ENCODE measurements at regions of chr1 and their contacts with region 1.

Region 1: GRCh38 chr1:150186789-150187559 is 37.3 kb downstream of the PLEKHO1 start:
- DNase-seq: peak; percentile 62 to 76 (median 64)
- ATAC-seq: peak; percentile 89
- H3K4me3 ChIP-seq: no peak overlapping the region
- H3K27ac ChIP-seq: peak overlapping the region; percentile 73; the same call in 2 of the 3 replicates
- H3K4me1 ChIP-seq: peaks cover 4 to 12% of the 10 kb centered on the region in 2 experiments; a peak in 4 of 5 replicates
- H3K27me3 ChIP-seq: no peaks in the 10 kb centered on the region
- CTCF ChIP-seq: peak; percentile 29 to 72 (median 51); a peak in 5 of 6 replicates
- EP300 ChIP-seq: peak; percentile 67
- POLR2A ChIP-seq: no peak
- RAD21 ChIP-seq: peak; percentile 73 to 75

Region 2: DNA sequence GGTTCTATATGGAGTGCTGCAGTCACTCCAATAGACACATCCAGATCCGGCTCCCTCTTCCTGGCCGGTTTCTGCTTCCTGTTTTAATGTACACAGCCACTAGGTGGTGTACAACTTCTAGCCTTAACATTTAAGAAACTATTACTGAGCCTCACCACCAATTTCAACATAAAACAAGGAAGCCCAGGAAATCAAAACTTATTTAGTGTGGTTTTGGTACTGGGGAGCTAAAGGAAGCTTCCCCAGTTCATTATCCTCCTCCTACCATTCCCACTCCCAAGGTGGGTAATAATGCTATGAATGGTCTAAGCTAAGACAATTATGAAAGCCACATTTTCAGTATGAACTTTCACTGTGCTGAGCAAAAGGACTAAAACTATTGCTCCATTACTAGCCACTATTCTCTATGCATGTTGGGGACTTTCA is 224.8 kb before region 1 on chr1:
- CTCF ChIA-PET with region 1: interaction called, 6 read pairs
- POLR2A ChIA-PET with region 1: interaction called, 3 read pairs
- in situ Hi-C with region 1: no loop called
- intact Hi-C with region 1: loop called (anchors 5 kb)
- DNase-seq: peak; percentile 52 to 79 (median 70)
- ATAC-seq: peak; percentile 96
- H3K4me3 ChIP-seq: no peak overlapping the region
- H3K27ac ChIP-seq: no peak overlapping the region
- H3K4me1 ChIP-seq: no peaks in the 10 kb centered on the region
- H3K27me3 ChIP-seq: no peaks in the 10 kb centered on the region
- CTCF ChIP-seq: peak; percentile 70 to 85 (median 77)
- EP300 ChIP-seq: no peak
- POLR2A ChIP-seq: no peak
- RAD21 ChIP-seq: peak; percentile 87 to 90

Region 3: GRCh38 chr1:150067184-150068036 is 119.6 kb before region 1 on chr1 and contains the start of gene VPS45:
- CTCF ChIA-PET with region 1: interaction called, 19 read pairs
- POLR2A ChIA-PET with region 1: interaction called, 8 read pairs
- in situ Hi-C with region 1: no loop called
- intact Hi-C with region 1: loop called (anchors 5 kb)
- DNase-seq: peak; percentile 87 to 94 (median 90)
- ATAC-seq: peak; percentile 98
- H3K4me3 ChIP-seq: peak within 1 kb of the TSS; percentile 47
- H3K27ac ChIP-seq: peak within 1 kb of the TSS; percentile 75
- H3K4me1 ChIP-seq: peaks cover 9 to 14% of the 10 kb centered on the region in 2 experiments; a peak in 3 of 5 replicates
- H3K27me3 ChIP-seq: no peaks in the 10 kb centered on the region
- CTCF ChIP-seq: 0 out of 6 replicates have a peak, but pooled peaks of 1 of the 3 experiments have one; percentile 6
- EP300 ChIP-seq: peak; percentile 28; the same call in 1 of the 2 replicates
- POLR2A ChIP-seq: peak; percentile 83
- RAD21 ChIP-seq: no peak
- polyA plus RNA-seq, gene VPS45: 21.3 to 43.6 TPM

Region 4: DNA sequence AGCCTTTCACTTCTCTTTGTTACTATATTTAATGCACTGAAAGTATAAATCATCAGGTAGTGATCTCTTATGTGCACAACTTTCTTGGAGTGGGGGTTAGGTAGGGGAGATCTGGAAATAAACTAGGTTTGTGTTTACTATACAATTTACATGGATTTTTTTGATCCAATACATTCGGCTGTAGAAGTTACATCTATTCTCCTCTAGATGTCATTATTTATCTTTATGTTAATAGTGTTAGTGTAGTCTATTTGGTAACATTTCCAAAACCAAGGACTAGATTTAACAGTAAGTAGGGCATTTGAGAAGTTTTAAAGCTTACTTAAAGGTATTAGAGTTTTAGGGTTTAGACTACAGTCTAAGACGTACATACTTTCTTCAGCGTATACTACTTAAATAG is 114.0 kb before region 1 on chr1:
- CTCF ChIA-PET with region 1: interaction called, 19 read pairs
- POLR2A ChIA-PET with region 1: interaction called, 8 read pairs
- in situ Hi-C with region 1: no loop called
- intact Hi-C with region 1: loop called (anchors 5 kb)
- DNase-seq: no peak
- ATAC-seq: peak; percentile 62
- H3K4me3 ChIP-seq: no peak overlapping the region
- H3K27ac ChIP-seq: no peak overlapping the region
- H3K4me1 ChIP-seq: peaks cover 0 to 15% of the 10 kb centered on the region in 2 experiments; a peak in 2 of 5 replicates
- H3K27me3 ChIP-seq: no peaks in the 10 kb centered on the region
- CTCF ChIP-seq: peak in 1 of 3 experiments; percentile 67; a peak in 4 of 6 replicates
- EP300 ChIP-seq: no peak
- POLR2A ChIP-seq: no peak
- RAD21 ChIP-seq: peak; percentile 69 to 79

Region 5: DNA sequence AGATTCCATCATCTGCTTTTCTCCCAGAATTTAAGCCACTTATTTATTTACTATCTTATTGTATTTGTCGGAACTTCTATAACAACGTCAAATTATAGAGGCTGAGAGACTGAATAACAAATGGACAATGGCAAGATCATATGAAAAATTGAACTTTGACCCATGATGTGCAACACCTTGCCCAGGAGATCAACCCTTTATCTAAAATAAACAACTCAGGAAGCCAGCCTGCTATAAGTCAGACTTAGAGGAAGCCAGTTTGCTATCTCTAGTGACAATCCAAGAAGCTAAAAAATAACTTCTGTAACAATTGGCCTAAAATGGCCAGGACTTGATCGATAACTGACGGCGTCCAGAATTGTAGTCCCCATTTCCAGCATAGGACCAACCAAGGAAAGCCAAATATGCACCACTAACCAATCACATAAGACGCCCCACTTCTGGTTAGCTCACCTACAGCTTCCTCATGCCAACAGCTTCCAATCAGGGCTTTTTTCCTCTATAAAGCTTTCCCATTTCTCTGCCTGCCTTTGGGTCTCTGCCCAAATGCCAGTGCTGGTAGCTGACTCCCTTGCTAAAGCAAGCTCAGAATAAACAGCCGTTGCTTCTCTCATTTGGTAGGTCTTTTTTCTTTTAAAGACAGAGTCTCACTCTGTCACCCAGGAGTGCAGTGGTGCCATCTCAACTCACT is 20.5 kb after region 1 on chr1:
- CTCF ChIA-PET with region 1: no interaction called
- POLR2A ChIA-PET with region 1: no interaction called
- in situ Hi-C with region 1: no loop called
- intact Hi-C with region 1: no loop called
- DNase-seq: no peak
- ATAC-seq: no peak
- H3K4me3 ChIP-seq: no peak overlapping the region
- H3K27ac ChIP-seq: no peak overlapping the region
- H3K4me1 ChIP-seq: no peaks in the 10 kb centered on the region
- H3K27me3 ChIP-seq: no peaks in the 10 kb centered on the region; a peak in 1 of 5 replicates
- CTCF ChIP-seq: no peak
- EP300 ChIP-seq: no peak
- POLR2A ChIP-seq: no peak
- RAD21 ChIP-seq: no peak